PC-9 (cell line): ENCODE measurements at regions of chr11 and their contacts with region 1.

Region 1: GRCh38 chr11:12288212-12288930 is 89.0 kb upstream of the PARVA start:
- DNase-seq: peak; percentile 51 to 66
- H3K4me3 ChIP-seq: no peak overlapping the region
- H3K27ac ChIP-seq: peak overlapping the region; percentile 88
- H3K4me1 ChIP-seq: peaks cover 50% of the 10 kb centered on the region
- H3K27me3 ChIP-seq: no peaks in the 10 kb centered on the region
- CTCF ChIP-seq: peak; percentile 81

Region 2: DNA sequence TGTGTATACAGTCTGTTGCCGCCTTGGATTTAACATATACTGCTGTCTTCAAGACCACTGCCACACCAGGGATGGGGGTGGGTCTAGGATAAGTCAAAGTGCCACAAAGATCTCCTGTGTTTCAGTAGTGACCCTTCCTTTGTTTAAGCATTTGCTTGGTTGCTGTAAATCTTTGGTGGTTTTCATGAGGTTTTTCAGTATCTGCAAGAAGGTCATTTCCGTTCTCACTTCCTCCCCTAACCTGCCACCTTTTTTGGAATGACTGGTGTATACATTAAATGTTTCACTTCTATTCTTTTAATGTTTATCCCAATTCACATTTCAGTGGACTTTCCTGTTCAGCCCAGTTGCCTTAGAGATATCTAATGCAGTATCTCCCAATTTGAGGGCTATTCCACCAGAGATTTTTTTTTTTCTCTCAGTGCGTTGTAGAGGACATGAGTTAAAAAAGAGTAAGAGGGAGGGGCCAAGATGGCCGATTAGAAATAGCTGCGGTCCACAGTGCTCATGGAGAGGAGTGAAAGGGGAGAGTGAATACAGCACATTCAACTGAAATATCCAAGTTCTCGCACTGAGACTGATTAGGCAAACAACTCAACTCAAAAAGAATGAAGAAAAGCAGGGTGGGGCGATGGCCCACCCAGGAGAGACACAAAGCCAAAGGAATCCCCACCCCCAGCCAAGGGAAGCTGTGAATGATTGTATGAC is 403.4 kb before region 1 on chr11:
- CTCF ChIA-PET with region 1: no interaction called
- POLR2A ChIA-PET with region 1: no interaction called
- intact Hi-C with region 1: no loop called
- DNase-seq: no peak
- H3K4me3 ChIP-seq: no peak overlapping the region
- H3K27ac ChIP-seq: no peak overlapping the region
- H3K4me1 ChIP-seq: no peaks in the 10 kb centered on the region
- H3K27me3 ChIP-seq: no peaks in the 10 kb centered on the region
- CTCF ChIP-seq: no peak

Region 3: DNA sequence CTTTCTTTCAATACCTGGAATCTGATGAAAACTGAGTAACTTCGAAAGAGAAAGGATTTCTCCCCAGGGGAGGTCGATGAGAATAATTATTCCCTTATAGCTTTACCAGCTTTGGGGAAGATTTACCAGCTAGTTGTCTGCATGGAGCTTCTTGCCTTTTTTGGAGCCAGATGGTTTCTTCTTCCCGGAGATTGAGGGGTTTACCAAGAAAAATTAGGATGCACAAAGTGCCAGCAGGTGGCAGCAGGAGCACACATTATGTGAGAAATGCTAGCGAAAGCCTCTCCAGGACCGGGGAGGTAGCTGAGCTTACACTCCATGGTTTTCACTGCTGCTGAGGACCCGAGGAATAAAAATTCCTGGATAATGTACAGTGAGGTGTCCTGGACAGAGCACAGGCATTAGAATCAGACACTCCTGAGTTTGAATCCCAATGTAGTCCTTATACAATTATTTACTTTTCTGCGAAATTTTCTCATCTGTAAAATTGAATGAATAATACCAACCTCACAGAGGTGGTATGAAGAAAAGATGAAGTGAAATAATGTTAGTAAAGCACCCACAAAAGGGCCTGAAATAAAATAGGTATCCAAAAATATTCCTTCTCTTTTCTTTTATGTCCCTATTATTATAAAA is 43.0 kb after region 1 on chr11:
- CTCF ChIA-PET with region 1: interaction called, 10 read pairs
- POLR2A ChIA-PET with region 1: no interaction called
- intact Hi-C with region 1: loop called (anchors 1 kb)
- DNase-seq: peak; percentile 61 to 68
- H3K4me3 ChIP-seq: no peak overlapping the region
- H3K27ac ChIP-seq: no peak overlapping the region
- H3K4me1 ChIP-seq: no peaks in the 10 kb centered on the region
- H3K27me3 ChIP-seq: no peaks in the 10 kb centered on the region
- CTCF ChIP-seq: peak; percentile 82

Region 4: DNA sequence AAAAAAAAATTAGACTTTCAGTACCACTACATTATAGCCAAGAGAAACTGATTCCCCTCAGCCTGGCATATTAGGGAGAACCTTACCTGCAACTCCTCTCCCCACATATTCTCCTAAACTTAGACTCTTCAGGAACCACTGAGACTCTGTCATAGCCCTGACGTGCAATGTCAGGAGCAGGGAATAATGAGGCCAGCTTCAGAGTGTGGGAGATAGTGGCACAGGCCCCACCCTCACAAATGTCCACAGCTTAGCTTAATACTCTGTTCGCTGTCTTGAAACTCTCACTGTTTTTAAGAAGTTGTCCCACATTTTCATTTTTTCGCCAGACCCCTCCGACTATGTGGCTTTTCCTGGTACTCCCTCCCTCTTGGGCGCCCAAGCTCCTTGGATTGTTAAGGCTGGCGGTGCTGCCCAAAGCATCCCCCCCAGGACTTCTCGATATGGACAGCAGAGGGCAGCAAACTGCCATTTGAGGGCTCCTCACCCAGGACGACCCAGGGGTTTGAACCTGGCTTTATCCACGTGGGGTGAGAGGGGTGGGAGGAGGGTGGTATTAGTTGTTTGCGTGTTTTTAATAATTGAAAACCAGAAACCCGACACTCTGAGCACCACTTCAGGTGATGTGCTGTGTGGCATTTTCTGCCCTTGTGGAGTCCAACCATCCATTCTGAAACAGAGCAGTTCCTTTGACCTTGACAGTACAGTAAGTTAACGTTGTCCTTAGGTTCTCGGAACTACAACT is 675.6 kb after region 1 on chr11:
- CTCF ChIA-PET with region 1: interaction called, 7 read pairs
- POLR2A ChIA-PET with region 1: no interaction called
- intact Hi-C with region 1: loop called (anchors 1 kb)
- DNase-seq: peak in 1 of 2 experiments; percentile 55
- H3K4me3 ChIP-seq: no peak overlapping the region
- H3K27ac ChIP-seq: no peak overlapping the region
- H3K4me1 ChIP-seq: no peaks in the 10 kb centered on the region
- H3K27me3 ChIP-seq: no peaks in the 10 kb centered on the region
- CTCF ChIP-seq: peak; percentile 87

Region 5: GRCh38 chr11:13210424-13210823 is 922.1 kb after region 1 on chr11:
- CTCF ChIA-PET with region 1: no interaction called
- POLR2A ChIA-PET with region 1: no interaction called
- intact Hi-C with region 1: loop called (anchors 2 kb)
- DNase-seq: peak; percentile 39 to 44
- H3K4me3 ChIP-seq: no peak overlapping the region
- H3K27ac ChIP-seq: no peak overlapping the region
- H3K4me1 ChIP-seq: peaks cover 62% of the 10 kb centered on the region
- H3K27me3 ChIP-seq: no peaks in the 10 kb centered on the region
- CTCF ChIP-seq: peak; percentile 78

Region 6: GRCh38 chr11:13343931-13344717 is 1055.8 kb after region 1 on chr11:
- CTCF ChIA-PET with region 1: no interaction called
- POLR2A ChIA-PET with region 1: no interaction called
- intact Hi-C with region 1: loop called (anchors 5 kb)
- DNase-seq: peak; percentile 49 to 59
- H3K4me3 ChIP-seq: no peak overlapping the region
- H3K27ac ChIP-seq: no peak overlapping the region
- H3K4me1 ChIP-seq: peaks cover under 1% of the 10 kb centered on the region; the same call in 1 of the 2 replicates
- H3K27me3 ChIP-seq: no peaks in the 10 kb centered on the region
- CTCF ChIP-seq: peak; percentile 82